GM12878 (cell line): ENCODE measurements at regions of chr1 and their contacts with region 1.

Region 1: GRCh38 chr1:214525535-214526019 is 25.8 kb downstream of the PTPN14 start:
- DNase-seq: no peak
- ATAC-seq: peak; percentile 81
- H3K4me3 ChIP-seq: no peak overlapping the region
- H3K27ac ChIP-seq: no peak overlapping the region
- H3K4me1 ChIP-seq: peaks cover 5% of the 10 kb centered on the region; the same call in 1 of the 2 replicates
- H3K27me3 ChIP-seq: no peaks in the 10 kb centered on the region
- CTCF ChIP-seq: no peak
- EP300 ChIP-seq: no peak
- POLR2A ChIP-seq: no peak
- RAD21 ChIP-seq: no peak

Region 2: GRCh38 chr1:214514032-214514818 is 11.4 kb before region 1 on chr1:
- CTCF ChIA-PET with region 1: interaction called, 3 read pairs
- POLR2A ChIA-PET with region 1: interaction called, 5 read pairs
- RAD21 ChIA-PET with region 1: interaction called, 13 read pairs
- SMC1A ChIA-PET with region 1: interaction called, 3 read pairs
- in situ Hi-C with region 1: no loop called
- intact Hi-C with region 1: no loop called
- DNase-seq: no peak
- ATAC-seq: peak; percentile 25; the same call in 2 of the 3 replicates
- H3K4me3 ChIP-seq: no peak overlapping the region
- H3K27ac ChIP-seq: no peak overlapping the region
- H3K4me1 ChIP-seq: no peaks in the 10 kb centered on the region
- H3K27me3 ChIP-seq: no peaks in the 10 kb centered on the region; a peak in 1 of 4 replicates
- CTCF ChIP-seq: no peak
- EP300 ChIP-seq: no peak
- POLR2A ChIP-seq: no peak
- RAD21 ChIP-seq: no peak